KBM-7 (cell line): ENCODE measurements at regions of chr9 and their contacts with region 1.

Region 1: GRCh38 chr9:35470894-35471293 is 19.0 kb upstream of the RUSC2 start:
- DNase-seq: no peak

Region 2: DNA sequence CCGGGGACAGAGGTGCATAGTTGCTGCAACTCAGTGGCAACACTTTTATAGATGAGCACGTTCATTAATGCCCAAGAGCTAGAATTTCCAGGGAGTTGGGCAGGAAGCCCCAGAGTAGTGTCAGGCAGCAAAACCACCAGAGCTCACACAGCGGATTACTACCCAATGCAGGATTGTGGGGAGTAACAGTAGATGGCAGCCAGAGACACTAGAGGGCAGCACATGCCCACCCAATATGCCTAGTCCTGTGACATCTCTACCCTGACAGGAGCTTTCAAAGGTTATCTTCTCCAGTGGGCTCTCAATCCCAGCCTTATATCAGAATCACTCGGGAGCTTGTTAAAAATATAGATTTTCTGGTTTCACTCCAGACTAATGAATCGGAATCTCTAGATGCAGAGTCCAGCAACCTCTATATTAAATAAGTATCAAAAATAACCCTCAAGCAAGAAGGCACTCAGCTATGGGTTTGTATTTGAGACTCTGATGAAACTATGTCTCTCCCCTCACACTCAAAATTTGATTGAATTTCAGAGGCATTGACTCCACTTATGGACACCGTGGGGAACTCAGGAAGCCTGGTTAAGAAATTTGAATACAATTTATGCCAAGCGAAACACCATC is 571.2 kb before region 1 on chr9:
- in situ Hi-C with region 1: loop called (anchors 25 kb)
- DNase-seq: peak; percentile 90

Region 3: GRCh38 chr9:35116898-35117551 is 353.9 kb before region 1 on chr9:
- in situ Hi-C with region 1: loop called (anchors 25 kb)
- DNase-seq: peak; percentile 91